Cardiac septum (tissue), 1 donor: ENCODE measurements at regions of chr2 and their contacts with region 1.

Region 1: DNA sequence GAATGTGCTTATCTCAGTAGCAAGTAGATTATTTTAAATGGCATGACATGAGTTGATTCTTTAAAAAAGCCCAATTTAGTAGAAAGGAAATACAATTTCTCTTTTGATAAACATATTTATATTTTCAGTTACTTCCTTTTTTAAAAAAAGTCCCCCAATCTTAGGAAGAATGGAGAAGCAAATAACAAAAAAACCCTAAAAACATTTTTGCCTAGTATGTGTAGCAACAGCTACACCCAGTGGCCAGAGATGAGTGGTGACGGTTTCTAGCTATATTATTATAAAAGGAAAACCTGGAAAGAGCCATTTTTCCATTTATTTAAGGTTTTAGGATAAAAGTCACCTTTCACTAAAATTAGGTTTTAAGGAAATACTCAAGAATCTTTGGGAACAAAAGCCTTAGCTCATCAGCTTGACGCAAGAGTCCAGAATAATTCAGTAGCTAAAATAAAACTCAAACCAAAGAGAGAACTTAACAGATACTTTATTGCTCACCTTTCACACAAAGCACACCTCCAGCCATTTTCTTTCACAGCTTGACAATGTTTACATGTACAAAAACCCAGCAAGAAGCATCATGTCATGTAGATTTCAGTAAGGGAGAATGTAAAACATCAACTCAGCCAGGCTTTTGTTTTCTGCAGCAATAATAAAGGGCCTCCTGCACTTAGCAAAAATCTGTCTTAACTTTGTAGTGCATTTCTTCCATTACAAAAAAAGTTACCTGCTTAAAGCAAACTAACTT is 15.7 kb downstream of the FAM98A start:
- DNase-seq: no peak

Region 2: GRCh38 chr2:32783469-32783868 is 799.9 kb before region 1 on chr2:
- intact Hi-C with region 1: loop called (anchors 10 kb)
- DNase-seq: no peak

Region 3: GRCh38 chr2:33412920-33413319 is 170.4 kb before region 1 on chr2:
- intact Hi-C with region 1: loop called (anchors 5 kb)
- DNase-seq: no peak

Region 4: GRCh38 chr2:33488715-33489540 is 94.4 kb before region 1 on chr2:
- intact Hi-C with region 1: no loop called
- DNase-seq: no peak